Activated CD8-positive, alpha-beta T cell treated with anti-CD3 and anti-CD28 coated beads for 36 hours (primary cell): ENCODE measurements at regions of chr11 and their contacts with region 1.

Region 1: DNA sequence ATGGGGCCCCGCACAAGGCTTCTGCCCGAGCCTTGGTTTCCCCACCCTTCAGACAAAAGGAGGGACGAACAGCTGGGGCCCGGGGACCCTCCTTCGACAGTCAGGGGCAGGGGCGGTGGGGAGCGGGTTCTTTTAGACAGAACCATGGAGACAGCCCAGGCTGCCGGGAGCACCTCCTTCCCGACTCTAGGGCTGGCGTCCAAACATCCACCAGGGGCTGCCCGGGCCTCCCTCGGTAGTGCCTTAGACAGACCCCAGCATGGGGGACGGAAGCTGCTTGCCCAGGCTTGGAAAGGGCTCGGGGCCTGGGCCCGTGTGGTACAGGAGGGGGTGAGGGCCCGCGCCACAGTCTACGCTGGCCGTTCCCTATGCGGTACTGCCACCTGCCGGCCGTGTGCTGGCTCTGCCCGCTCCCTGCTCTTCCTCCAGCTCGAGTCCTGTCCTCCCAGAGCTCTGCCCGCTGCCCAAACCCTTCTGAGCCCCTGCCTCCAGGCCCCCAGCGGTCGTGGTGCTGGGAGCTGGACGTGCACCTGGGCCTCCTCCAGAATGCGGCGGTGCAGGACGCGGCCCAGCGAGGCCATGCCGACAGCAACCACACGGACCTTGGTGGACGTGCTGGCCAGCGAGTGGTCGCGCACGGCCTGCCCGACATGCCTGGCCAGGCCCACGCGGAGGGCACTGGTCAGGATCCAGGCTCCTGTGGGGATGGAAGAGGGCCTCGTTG is 20.1 kb downstream of the TSSC4 start:
- DNase-seq: peak; percentile 77
- ATAC-seq: peak; percentile 98
- H3K4me3 Mint-ChIP-seq: no peak overlapping the region
- H3K27ac Mint-ChIP-seq: no peak overlapping the region
- H3K4me1 Mint-ChIP-seq: peaks cover 2% of the 10 kb centered on the region
- H3K27me3 Mint-ChIP-seq: no peaks in the 10 kb centered on the region
- CTCF ChIP-seq: peak; percentile 95

Region 2: DNA sequence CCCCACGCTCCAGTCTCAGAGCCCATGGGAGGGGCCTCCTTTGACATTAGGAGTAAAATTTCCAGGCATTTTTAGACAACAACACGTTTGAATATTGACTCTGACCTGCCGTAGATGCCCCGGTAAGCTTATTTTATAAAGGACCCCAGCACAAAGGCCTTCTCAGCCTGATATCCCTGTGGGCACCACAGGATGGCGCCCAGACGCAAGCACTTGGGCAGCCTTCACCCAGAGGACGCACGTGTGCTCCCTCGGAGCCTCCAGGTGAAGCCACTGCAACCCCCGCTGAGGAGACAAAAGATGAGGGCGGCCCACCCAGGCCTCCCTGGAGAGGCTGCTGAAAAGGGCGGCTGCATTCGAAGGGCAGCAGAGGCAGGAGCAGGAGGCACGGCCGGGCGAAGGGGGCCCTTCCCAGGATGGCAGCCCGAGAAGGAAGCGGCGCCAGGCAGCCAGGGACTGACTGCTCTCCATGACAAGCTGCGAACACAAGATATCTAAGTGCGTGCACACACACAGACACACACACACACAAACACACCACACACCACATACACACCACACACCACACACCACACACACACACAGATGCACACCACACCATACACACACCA is 233.9 kb before region 1 on chr11:
- CTCF ChIA-PET with region 1: interaction called, 42 read pairs
- POLR2A ChIA-PET with region 1: no interaction called
- intact Hi-C with region 1: no loop called
- DNase-seq: peak; percentile 76
- ATAC-seq: peak; percentile 94
- H3K4me3 Mint-ChIP-seq: no peak overlapping the region
- H3K27ac Mint-ChIP-seq: no peak overlapping the region
- H3K4me1 Mint-ChIP-seq: no peaks in the 10 kb centered on the region
- H3K27me3 Mint-ChIP-seq: peaks cover 18% of the 10 kb centered on the region
- CTCF ChIP-seq: peak; percentile 75

Region 3: GRCh38 chr11:2202055-2202899 is 218.4 kb before region 1 on chr11:
- CTCF ChIA-PET with region 1: interaction called, 20 read pairs
- POLR2A ChIA-PET with region 1: no interaction called
- intact Hi-C with region 1: loop called (anchors 5 kb)
- DNase-seq: no peak
- ATAC-seq: no peak
- H3K4me3 Mint-ChIP-seq: no peak overlapping the region
- H3K27ac Mint-ChIP-seq: no peak overlapping the region
- H3K4me1 Mint-ChIP-seq: no peaks in the 10 kb centered on the region
- H3K27me3 Mint-ChIP-seq: no peaks in the 10 kb centered on the region
- CTCF ChIP-seq: no peak

Region 4: DNA sequence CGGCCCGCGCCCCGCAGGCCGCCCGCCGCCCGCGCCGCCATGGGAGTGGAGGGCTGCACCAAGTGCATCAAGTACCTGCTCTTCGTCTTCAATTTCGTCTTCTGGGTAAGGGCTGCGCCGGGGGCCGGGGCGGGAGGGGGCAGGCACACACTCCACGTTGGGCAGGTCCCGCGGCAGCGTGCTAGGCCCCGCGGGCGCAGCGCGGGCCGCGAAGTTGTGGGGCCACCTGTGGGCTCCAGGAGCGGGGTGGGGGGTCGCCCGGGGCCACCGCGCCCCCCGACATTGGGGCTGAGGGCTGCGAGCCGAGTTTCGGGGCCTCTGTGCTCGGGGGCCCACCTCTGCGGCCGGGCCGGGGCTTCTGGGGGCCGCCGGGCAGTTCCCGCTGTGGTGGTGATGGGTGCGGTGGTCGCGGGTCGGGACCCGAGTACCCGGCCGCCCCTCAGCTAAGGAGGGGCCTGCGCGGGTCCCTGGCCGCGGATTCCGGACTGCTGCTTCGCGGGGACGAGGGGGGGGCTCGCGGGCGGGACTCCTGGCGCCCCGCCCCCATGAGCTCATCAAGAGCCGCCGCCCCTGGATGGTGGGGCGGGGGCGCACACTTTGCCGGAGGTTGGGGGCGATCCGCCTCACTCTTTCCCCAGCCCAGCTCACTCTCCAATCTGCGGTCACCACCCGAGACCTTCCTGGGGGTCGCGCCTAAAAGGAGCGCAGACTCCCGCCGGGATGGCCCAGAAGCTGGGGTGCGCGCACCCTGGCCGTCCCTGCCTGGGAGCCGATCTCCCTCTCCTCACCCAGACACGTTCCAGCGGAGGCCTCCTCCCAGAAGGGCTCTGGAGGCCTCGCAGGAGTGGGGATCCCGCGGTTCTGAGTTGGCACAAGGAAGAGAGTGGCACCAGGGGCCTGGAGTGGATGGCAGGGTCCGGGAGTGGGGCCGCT is 42.9 kb before region 1 on chr11:
- CTCF ChIA-PET with region 1: interaction called, 12 read pairs
- POLR2A ChIA-PET with region 1: no interaction called
- intact Hi-C with region 1: no loop called
- DNase-seq: peak; percentile 73
- ATAC-seq: peak; percentile 46
- H3K4me3 Mint-ChIP-seq: peak overlapping the region; percentile 88
- H3K27ac Mint-ChIP-seq: peak overlapping the region; percentile 84
- H3K4me1 Mint-ChIP-seq: peaks cover 30% of the 10 kb centered on the region
- H3K27me3 Mint-ChIP-seq: no peaks in the 10 kb centered on the region
- CTCF ChIP-seq: no peak

Region 5: GRCh38 chr11:2400069-2400760 is 20.4 kb before region 1 on chr11 and contains the start of gene TSSC4:
- CTCF ChIA-PET with region 1: interaction called, 38 read pairs
- POLR2A ChIA-PET with region 1: interaction called, 3 read pairs
- intact Hi-C with region 1: no loop called
- DNase-seq: peak; percentile 99
- ATAC-seq: peak; percentile 92
- H3K4me3 Mint-ChIP-seq: peak within 1 kb of the TSS; percentile 84
- H3K27ac Mint-ChIP-seq: peak within 1 kb of the TSS; percentile 85
- H3K4me1 Mint-ChIP-seq: peaks cover 12% of the 10 kb centered on the region
- H3K27me3 Mint-ChIP-seq: no peaks in the 10 kb centered on the region
- CTCF ChIP-seq: peak; percentile 90
- total RNA-seq, gene TSSC4: 36.2 to 38.9 TPM